ENCODE measurements at regions of chr6 and their contacts with region 1.

Region 1: GRCh38 chr6:111478749-111479148 is 4.3 kb downstream of the REV3L start:
- DNase-seq: peak; percentile 60
- H3K4me3 ChIP-seq: no peak overlapping the region
- H3K27ac ChIP-seq: peak overlapping the region; percentile 6
- H3K4me1 ChIP-seq: peaks cover 15% of the 10 kb centered on the region
- H3K27me3 ChIP-seq: no peaks in the 10 kb centered on the region
- CTCF ChIP-seq: peak; percentile 32 to 54

Region 2: DNA sequence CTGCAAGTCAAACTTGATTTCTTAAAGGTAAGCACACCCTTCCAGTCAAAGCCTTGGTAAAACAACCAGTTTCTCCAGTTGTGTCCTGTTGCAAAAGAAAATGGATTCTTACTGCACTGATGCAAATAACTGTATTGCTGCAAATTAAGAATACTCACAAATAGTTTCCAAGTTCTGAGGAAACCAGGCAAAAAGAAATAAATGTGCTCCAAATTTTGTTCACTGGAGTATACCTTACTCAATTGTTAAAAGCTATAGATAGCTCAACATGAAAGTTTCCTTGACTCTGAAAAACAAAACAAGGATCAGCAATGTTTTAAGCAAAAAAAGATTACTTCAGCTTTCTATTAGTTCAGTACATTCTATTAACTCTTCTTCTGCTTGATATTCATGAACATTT is 316.2 kb before region 1 on chr6:
- CTCF ChIA-PET with region 1: no interaction called
- dilution Hi-C with region 1: no loop called
- in situ Hi-C with region 1: no loop called
- intact Hi-C with region 1: no loop called
- DNase-seq: no peak
- H3K4me3 ChIP-seq: no peak overlapping the region
- H3K27ac ChIP-seq: no peak overlapping the region
- H3K4me1 ChIP-seq: no peaks in the 10 kb centered on the region
- H3K27me3 ChIP-seq: peaks cover 4% of the 10 kb centered on the region
- CTCF ChIP-seq: no peak

Region 3: DNA sequence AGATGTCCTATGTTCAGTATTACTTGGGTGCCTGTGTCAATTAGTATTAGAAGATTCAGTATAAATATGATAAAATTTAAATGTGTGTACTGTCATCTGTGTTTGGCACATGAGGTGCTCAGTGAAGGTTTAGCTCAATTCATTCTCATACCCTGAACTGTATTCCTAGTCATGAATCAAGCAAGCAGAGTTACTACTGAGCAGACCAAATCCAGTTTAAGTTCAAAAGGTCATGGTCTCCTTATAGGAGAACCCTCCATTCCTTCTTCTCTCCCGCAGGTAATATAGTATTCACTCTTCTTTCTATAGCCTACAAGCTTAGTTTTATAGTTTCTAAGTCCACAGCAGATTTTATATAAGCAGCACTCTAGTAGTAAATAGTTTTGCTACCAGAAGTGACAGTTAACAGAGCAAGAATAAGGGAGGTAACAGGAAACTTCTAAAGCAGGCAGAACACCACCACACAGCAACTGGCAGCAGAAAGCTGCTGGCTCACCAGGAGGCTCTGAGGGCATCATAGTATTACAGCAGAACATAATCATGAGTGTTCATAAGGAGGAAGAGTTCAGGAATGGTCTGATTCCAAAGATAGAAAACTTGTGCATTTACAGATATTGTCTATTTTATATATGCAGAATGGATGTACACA is 258.2 kb before region 1 on chr6:
- CTCF ChIA-PET with region 1: no interaction called
- dilution Hi-C with region 1: no loop called
- in situ Hi-C with region 1: no loop called
- intact Hi-C with region 1: no loop called
- DNase-seq: no peak
- H3K4me3 ChIP-seq: no peak overlapping the region
- H3K27ac ChIP-seq: no peak overlapping the region
- H3K4me1 ChIP-seq: no peaks in the 10 kb centered on the region
- H3K27me3 ChIP-seq: peaks cover 3% of the 10 kb centered on the region
- CTCF ChIP-seq: no peak

Region 4: DNA sequence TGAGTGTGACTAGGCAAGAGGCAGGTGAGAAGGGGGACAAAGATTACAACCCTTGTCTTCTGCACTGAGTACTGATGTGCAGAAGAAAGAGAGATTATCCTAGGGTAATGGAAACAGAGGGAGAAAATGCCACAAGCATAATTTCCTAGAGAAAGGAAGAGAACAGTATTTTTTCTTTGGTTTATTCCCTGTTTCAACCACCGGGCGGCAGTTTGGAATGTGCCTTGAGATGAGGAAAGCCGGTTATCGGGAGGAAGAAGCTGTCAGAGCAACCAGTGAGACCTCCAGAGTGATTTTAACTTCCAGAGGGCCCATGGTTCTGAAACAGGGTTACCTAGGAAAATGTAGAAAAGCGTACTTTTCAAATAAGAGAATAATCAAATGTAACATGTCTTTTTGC is 117.1 kb before region 1 on chr6:
- CTCF ChIA-PET with region 1: interaction called, 5 read pairs
- dilution Hi-C with region 1: no loop called
- in situ Hi-C with region 1: no loop called
- intact Hi-C with region 1: loop called (anchors 1 kb)
- DNase-seq: peak; percentile 17
- H3K4me3 ChIP-seq: no peak overlapping the region
- H3K27ac ChIP-seq: no peak overlapping the region
- H3K4me1 ChIP-seq: no peaks in the 10 kb centered on the region
- H3K27me3 ChIP-seq: no peaks in the 10 kb centered on the region
- CTCF ChIP-seq: peak; percentile 13 to 55

Measured in mammary epithelial cell (primary cell).